Heart right ventricle (tissue), 16 donors: ENCODE measurements at regions of chr3 and their contacts with region 1.

Region 1: DNA sequence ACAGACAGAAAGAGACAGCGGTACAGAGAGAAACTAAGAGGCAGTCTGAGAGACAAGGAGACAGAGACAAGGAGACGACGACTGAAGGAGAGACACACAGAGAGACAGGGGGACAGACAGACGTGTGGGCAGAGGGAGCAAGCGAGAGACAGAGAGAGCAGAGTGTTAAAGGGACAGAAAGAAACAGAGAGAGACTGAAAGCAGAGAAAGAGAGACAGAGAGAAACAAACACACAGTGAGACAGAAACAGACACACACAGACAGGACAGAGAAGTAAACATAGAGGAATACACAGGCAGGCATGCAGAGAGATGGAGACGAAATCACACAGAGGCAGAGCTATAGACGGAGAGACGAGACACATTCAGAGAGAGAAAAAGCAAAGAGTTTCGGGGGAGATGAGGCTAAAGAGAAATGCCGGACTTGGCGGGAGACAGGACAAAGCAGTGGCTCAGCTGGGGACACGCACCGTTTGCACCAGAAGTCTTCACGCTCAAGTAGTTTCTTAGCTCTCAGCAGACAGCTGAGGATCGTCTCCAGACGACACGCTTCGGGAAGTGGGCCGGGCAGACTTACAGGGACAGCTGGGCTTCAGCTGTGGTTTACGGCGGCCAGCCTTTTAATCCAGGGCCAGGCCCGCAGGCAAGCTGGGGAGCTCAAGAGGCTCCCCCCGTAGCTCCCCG is 56.0 kb upstream of the DLG1 start:
- DNase-seq: peak; percentile 58 to 59
- ATAC-seq: peak in 7 of 8 donors; percentile 11 to 67 (median 44)
- H3K4me3 ChIP-seq: peak overlapping the region in 5 of 10 donors; percentile 5 to 34 (median 25)
- H3K27ac ChIP-seq: peak overlapping the region in 8 of 10 donors; percentile 22 to 85 (median 65)
- H3K4me1 ChIP-seq: peaks cover 3 to 53% (median 27%) of the 10 kb centered on the region in 9 donors
- H3K27me3 ChIP-seq: no peaks in the 10 kb centered on the region
- CTCF ChIP-seq: no peak

Region 2: GRCh38 chr3:197234947-197235914 is 119.2 kb before region 1 on chr3:
- intact Hi-C with region 1: no loop called
- DNase-seq: no peak
- ATAC-seq: no peak
- H3K4me3 ChIP-seq: no peak overlapping the region
- H3K27ac ChIP-seq: no peak overlapping the region
- H3K4me1 ChIP-seq: peaks cover 0 to 18% (median 0%) of the 10 kb centered on the region in 9 donors
- H3K27me3 ChIP-seq: no peaks in the 10 kb centered on the region
- CTCF ChIP-seq: no peak

Region 3: GRCh38 chr3:197298341-197298857 is 56.1 kb before region 1 on chr3 and contains the start of gene DLG1:
- intact Hi-C with region 1: loop called in 1 of 10 experiments (anchors 2 kb)
- DNase-seq: peak; percentile 88
- ATAC-seq: peak; percentile 79 to 94 (median 92)
- H3K4me3 ChIP-seq: peak within 1 kb of the TSS; percentile 78 to 100 (median 92)
- H3K27ac ChIP-seq: peak within 1 kb of the TSS; percentile 80 to 96 (median 94)
- H3K4me1 ChIP-seq: peaks cover 5 to 43% (median 24%) of the 10 kb centered on the region in 9 donors
- H3K27me3 ChIP-seq: no peaks in the 10 kb centered on the region
- CTCF ChIP-seq: no peak
- total RNA-seq, gene DLG1: 29.0 to 97.4 (median 57.6) TPM

Region 4: GRCh38 chr3:197394464-197395321 is 40.2 kb after region 1 on chr3:
- intact Hi-C with region 1: loop called in 1 of 10 experiments (anchors 5 kb)
- DNase-seq: peak; percentile 51 to 68
- ATAC-seq: peak; percentile 81 to 96 (median 91)
- H3K4me3 ChIP-seq: no peak overlapping the region
- H3K27ac ChIP-seq: peak overlapping the region; percentile 39 to 88 (median 73)
- H3K4me1 ChIP-seq: peaks cover 0 to 32% (median 9%) of the 10 kb centered on the region in 9 donors
- H3K27me3 ChIP-seq: no peaks in the 10 kb centered on the region
- CTCF ChIP-seq: no peak

Region 5: DNA sequence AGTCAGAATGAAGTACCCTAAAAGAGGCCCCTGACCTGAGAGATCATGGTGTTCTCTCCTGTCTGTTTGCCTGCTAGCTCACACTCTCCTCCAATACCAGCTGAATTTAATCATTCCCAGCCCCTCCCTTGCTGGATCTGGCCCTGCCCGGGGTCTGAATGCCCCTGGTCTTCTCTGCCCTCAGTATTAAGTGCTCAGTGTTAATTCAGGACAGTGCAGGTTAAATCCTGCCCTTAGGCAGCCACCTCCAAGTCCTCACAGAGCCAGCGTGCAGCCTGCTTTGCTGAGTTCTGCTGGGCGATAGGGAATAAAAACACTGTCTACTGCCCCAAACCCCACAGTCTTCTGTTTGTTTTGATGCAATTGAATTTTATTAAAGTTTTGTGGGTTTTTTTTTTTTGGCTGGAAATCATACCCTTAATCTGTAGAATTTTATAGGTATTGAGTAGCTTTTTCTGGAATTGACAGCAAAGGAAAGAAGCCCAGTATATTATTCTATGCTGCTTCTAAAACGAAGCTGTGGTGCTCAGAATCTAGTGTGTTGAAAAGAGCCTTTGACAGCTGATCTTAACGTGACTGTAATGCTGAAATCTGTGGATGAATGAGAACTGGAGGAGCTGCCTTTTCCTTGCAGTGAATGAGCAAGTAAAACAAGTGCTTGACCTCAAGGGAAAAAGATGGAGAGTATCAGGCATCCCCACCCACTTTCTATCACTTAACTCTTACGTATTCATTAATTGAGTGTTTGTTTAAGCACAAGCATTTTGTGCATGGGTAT is 213.6 kb after region 1 on chr3:
- intact Hi-C with region 1: no loop called
- DNase-seq: no peak
- ATAC-seq: no peak
- H3K4me3 ChIP-seq: no peak overlapping the region
- H3K27ac ChIP-seq: no peak overlapping the region
- H3K4me1 ChIP-seq: no peaks in the 10 kb centered on the region
- H3K27me3 ChIP-seq: peaks cover 0 to 28% (median 17%) of the 10 kb centered on the region in 7 donors
- CTCF ChIP-seq: no peak